Activated B cell treated with CpG ODN at 0.5 μM for 24 hours (primary cell): ENCODE measurements at regions of chr6 and their contacts with region 1.

Region 1: DNA sequence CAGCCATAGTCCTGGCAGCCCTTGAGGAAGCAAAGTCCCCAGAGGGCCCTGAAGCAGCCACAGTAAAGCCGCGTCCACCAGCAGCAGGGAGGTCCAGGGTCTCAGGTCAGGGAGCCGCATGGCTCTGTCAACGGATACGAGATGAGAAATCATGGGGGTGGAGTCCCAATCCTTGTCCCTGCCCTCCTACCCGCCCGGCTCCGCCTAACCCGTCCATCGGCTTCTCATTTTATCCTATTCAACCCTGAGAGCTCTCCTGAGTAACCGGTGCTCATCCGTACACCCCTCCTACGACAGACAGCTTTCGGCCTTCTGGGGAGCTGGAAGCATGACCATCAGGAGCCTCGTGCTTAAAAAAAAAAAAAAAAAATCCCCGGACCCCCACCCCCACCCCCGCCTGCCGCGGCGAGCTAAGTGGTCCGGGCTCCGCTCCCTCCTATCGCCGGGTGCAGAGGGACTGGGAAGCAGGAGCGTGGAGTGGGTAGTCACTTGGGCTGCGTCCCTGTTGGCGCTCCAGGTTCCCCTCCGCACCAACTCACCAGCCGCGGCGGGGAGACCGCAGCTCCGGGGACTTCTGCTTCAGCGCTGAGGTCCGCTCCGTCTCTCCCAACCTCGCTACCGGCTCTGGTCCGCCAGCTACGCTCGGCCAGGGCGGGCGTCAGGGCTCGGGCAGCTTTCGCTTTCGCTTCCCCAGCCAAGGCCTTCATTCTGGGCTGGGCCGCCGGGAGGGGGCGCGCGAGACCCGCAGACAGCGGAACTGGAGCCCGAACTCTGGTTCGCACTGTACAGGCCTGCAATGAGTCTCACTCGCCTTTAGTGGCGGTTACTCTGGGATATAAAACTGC is at the start of gene TAP2:
- DNase-seq: peak; percentile 98
- ATAC-seq: peak; percentile 82
- H3K4me3 Mint-ChIP-seq: peak within 1 kb of the TSS; percentile 92
- H3K27ac Mint-ChIP-seq: peak within 1 kb of the TSS; percentile 100
- H3K4me1 Mint-ChIP-seq: peaks cover 91% of the 10 kb centered on the region
- H3K27me3 Mint-ChIP-seq: no peaks in the 10 kb centered on the region
- CTCF ChIP-seq: peak; percentile 23
- total RNA-seq, gene TAP2: 141 and 172 TPM in 2 replicates

Region 2: GRCh38 chr6:32609731-32610640 is 228.3 kb before region 1 on chr6:
- CTCF ChIA-PET with region 1: no interaction called
- POLR2A ChIA-PET with region 1: no interaction called
- intact Hi-C with region 1: no loop called
- DNase-seq: no peak
- ATAC-seq: peak; percentile 84
- H3K4me3 Mint-ChIP-seq: no peak overlapping the region
- H3K27ac Mint-ChIP-seq: no peak overlapping the region
- H3K4me1 Mint-ChIP-seq: peaks cover 56% of the 10 kb centered on the region
- H3K27me3 Mint-ChIP-seq: no peaks in the 10 kb centered on the region
- CTCF ChIP-seq: no peak

Region 3: DNA sequence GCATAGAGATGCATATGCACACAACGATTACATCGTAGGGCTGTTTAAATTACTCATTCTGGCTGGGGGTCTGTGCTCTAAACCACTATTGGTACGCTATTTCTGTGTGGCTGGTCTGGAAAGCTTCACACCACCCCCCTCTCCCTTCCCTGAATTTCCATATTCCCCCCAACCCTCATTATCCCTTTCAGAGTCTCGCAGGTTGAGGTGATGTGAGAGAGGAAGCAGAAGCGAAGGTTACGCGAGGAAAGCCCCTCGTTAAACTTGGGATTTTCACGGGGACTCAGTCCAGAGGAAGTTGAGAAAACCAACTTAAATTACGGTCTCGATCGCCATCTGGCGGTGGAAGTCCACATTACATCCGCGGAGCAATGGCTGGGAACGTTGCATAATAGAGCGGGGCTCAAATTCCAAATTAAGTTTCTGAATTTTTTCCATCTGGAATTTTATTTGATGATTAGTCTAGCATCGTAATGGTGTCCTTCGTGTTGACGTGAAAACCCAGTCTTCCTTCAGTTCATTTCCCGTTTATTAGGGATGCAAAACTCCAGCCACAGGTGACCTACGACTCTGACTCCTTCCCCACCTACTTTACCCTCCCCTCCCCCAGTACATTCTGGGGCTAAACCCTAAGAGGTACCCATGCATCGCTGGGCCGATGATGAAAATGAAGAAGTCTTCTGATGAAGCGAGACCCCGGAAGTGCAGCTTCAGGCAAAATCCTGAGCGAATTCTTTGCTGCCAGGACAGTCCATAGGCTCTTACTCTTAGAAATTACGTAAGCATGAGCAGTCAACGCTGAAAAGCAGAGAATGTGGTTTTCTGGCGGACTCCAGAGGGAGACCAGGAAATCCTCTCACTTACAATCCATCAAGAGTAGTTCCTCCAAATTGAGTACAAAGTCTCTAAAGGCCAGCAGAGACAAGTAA is 41.2 kb before region 1 on chr6:
- CTCF ChIA-PET with region 1: interaction called, 11 read pairs
- POLR2A ChIA-PET with region 1: interaction called, 16 read pairs
- intact Hi-C with region 1: loop called (anchors 1 kb)
- DNase-seq: peak; percentile 82
- ATAC-seq: peak; percentile 87
- H3K4me3 Mint-ChIP-seq: peak overlapping the region; percentile 82
- H3K27ac Mint-ChIP-seq: peak overlapping the region; percentile 95
- H3K4me1 Mint-ChIP-seq: peaks cover 40% of the 10 kb centered on the region
- H3K27me3 Mint-ChIP-seq: no peaks in the 10 kb centered on the region
- CTCF ChIP-seq: peak; percentile 91

Region 4: GRCh38 chr6:32853541-32854375 is 15.4 kb after region 1 on chr6 and contains the starts of genes PSMB9 and TAP1:
- CTCF ChIA-PET with region 1: interaction called, 218 read pairs
- POLR2A ChIA-PET with region 1: interaction called, 904 read pairs
- intact Hi-C with region 1: loop called (anchors 1 kb)
- DNase-seq: peak; percentile 91
- ATAC-seq: peak; percentile 80
- H3K4me3 Mint-ChIP-seq: peak within 1 kb of the TSS; percentile 99
- H3K27ac Mint-ChIP-seq: peak within 1 kb of the TSS; percentile 98
- H3K4me1 Mint-ChIP-seq: peaks cover 77% of the 10 kb centered on the region
- H3K27me3 Mint-ChIP-seq: no peaks in the 10 kb centered on the region
- CTCF ChIP-seq: peak; percentile 20
- total RNA-seq, gene PSMB9: 198 and 223 TPM in 2 replicates
- total RNA-seq, gene TAP1: 148 and 151 TPM in 2 replicates

Region 5: GRCh38 chr6:32885698-32886286 is 47.5 kb after region 1 on chr6:
- CTCF ChIA-PET with region 1: interaction called, 10 read pairs
- POLR2A ChIA-PET with region 1: interaction called, 5 read pairs
- intact Hi-C with region 1: no loop called
- DNase-seq: no peak
- ATAC-seq: peak; percentile 68
- H3K4me3 Mint-ChIP-seq: no peak overlapping the region
- H3K27ac Mint-ChIP-seq: no peak overlapping the region
- H3K4me1 Mint-ChIP-seq: peaks cover 27% of the 10 kb centered on the region
- H3K27me3 Mint-ChIP-seq: no peaks in the 10 kb centered on the region
- CTCF ChIP-seq: no peak

Region 6: DNA sequence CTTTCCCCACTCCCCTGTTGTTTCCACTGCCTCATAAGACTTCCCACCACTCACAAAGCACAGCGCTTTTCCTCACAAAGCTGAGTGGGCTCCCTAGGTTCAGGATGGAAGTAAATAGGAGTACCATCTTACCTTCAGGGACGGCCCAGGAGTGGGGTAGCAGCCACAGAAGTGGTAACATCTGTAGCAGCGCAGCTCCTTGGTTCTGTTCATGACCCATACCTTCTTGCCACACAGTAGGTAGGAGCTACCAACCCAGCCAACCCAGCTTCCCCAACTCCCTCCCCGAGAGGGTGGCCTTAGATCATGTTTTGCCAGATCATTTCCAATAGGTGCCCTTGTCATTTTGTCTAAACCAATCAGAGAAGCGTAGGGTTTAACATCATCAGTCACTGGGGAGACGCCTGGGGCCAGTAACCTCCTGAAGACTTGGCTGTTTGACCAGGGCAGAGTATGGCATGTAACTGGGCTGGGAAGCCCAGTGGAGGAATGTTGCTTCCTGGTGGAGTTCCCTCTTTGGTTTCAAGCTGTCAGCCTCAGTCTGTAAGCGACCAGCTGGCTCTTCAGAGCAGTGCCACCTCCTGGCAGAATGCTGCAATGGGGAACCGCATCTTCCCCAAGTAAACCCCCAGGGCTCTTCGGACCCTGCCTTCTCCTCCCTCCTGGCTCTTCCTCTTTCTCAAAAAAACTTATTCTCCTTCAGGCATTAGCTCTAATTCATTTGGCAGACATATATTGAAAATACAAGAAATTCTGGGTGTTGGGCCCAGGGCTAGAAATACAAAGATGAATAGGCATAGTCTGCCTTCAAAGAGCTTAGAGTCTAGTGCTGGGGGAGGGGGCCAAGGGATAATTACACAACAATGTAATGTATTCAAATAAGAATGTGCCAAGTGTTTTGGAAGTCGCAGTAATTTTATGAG is 114.7 kb after region 1 on chr6 and contains the start of gene HLA-DMA:
- CTCF ChIA-PET with region 1: interaction called, 9 read pairs
- POLR2A ChIA-PET with region 1: interaction called, 25 read pairs
- intact Hi-C with region 1: no loop called
- DNase-seq: peak; percentile 65
- ATAC-seq: peak; percentile 91
- H3K4me3 Mint-ChIP-seq: peak within 1 kb of the TSS; percentile 98
- H3K27ac Mint-ChIP-seq: peak within 1 kb of the TSS; percentile 97
- H3K4me1 Mint-ChIP-seq: peaks cover 85% of the 10 kb centered on the region
- H3K27me3 Mint-ChIP-seq: no peaks in the 10 kb centered on the region
- CTCF ChIP-seq: no peak
- total RNA-seq, gene HLA-DMA: 371 and 387 TPM in 2 replicates